PC-9 (cell line): ENCODE measurements at regions of chr17 and their contacts with region 1.

Region 1: DNA sequence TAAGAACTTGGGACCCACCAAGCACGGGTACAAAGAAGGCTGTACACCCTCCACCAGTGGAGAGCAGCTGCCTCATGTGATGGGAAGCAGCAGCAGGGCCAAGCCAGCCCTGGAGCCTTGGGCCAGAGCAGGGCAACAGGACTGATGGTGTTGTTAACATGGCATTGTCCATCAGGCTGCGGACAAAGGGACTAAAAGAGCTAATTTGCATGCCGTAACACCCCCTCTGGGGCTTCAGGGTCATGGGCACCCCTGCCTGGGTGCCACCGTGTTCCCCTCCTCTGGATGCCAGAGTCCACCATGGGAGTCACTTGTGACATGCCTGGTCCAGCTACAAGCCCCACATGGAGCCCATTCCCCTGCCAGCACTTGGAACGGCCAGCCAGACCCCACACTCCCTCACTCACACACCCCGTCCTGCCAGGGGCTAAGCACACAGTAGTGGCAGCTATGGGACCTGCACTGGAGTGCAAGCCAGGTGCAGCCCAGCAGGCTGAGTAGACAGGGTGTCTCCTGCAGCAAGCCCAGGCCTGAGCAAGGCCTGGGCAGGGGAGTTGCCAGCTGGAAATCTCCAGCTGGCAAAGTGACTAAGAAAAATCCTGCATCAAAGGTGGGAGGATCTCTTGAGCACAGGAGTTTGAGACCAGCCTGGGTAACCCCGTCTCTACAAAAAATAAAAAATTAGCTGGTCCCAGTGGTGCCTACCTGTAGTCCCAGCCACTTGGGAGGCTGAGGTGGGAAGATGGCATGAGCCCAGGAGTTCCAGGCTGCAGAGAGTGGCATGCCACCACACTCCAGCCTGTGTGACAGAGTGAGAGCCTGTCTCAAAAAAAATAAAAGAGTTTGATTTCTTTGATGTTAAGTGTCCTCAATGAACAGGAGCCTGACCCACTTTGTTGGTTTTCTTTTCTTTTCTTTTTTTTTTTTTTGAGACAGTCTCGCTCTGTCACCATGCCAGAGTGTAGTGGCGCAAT is 33.7 kb downstream of the NOL11 start:
- DNase-seq: no peak
- H3K4me3 ChIP-seq: no peak overlapping the region
- H3K27ac ChIP-seq: no peak overlapping the region
- H3K4me1 ChIP-seq: peaks cover 15% of the 10 kb centered on the region
- H3K27me3 ChIP-seq: no peaks in the 10 kb centered on the region
- CTCF ChIP-seq: no peak

Region 2: DNA sequence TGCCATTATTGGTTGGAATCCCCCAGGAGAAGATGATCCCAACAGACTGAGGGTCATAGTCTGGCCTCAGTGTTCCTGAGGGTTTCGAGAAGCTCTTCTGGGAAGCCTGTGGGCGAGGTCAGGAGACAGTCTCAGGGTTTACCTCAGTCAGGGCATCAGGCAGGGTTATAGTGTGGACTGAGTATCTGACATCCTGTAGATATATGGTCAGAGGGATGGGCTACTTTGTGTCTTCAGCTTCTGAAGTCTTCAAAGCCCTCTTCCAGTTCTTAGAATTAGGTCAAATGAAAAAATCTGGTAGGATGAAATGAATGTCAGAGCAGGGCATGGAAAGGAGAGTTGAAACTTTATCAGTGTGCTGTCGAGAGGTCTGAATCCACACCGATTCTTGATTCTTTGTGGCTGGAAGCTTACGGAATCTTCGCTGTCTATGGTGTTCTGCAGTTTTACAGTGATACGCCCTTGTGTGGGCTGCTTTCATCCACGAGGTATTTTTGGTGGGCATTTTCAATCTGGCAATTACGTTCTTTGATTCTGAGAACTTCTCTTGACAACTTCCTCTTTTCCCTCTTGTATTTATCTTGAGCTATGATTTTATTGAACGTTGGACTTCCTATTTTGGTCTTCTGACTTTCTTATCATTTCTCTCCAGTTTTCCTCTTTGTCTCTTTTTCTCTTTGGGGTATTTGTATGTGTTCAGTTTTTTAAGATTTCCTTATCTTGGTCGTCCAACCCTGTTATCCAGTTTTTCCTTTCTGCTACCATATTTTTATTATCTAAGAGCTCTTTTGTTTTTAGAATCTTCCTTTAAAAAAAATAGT is 104.3 kb after region 1 on chr17:
- CTCF ChIA-PET with region 1: interaction called, 13 read pairs
- POLR2A ChIA-PET with region 1: no interaction called
- intact Hi-C with region 1: no loop called
- DNase-seq: no peak
- H3K4me3 ChIP-seq: no peak overlapping the region
- H3K27ac ChIP-seq: no peak overlapping the region
- H3K4me1 ChIP-seq: no peaks in the 10 kb centered on the region
- H3K27me3 ChIP-seq: no peaks in the 10 kb centered on the region
- CTCF ChIP-seq: no peak